Dendritic cell treated with granulocyte-macrophage colony-stimulating factor and Interleukin-4, amounts not matched to agents 40 ng/mL and 50 ng/mL, for 4 days (primary cell): ENCODE measurements at regions of chr20 and their contacts with region 1.

Region 1: DNA sequence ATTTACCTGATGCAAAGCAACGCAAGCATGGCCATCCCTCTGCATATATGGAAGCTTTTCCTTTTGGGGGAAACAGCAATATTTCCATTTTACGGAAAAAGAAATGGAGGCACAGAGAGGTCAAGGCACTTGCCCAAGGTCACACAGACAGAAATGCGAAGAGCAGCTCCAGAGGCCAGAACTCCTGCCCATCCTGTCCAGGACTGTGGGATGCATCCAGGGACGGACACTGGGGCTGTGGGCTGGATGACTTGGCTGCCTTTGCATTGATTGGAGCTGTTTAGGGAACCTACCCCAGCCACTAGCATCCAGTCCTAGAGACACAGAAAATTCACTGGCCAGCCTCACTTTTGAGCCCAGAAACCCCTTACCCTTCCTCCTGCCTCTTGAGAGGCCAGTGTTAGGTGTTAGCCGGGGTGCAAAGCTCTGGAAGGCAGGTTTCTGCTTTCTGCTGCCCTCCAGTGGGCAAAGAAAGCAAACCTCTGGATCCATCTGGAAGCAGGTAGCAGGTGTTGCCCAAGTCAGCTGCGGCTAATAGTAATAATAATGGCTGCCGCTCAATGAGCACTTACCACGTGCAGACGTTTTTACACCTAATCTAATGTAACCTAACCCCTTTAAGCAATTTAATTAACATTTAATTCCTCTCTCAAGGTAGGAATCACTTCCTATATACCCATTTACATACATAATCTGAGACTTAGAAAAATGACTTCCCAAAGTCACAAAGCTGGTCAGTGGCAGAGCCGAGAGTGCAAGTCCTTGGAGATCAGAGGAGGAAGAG is 31.7 kb upstream of the CCN5 start:
- H3K4me3 Mint-ChIP-seq: no peak overlapping the region
- H3K27ac Mint-ChIP-seq: no peak overlapping the region
- H3K4me1 Mint-ChIP-seq: peaks cover 15% of the 10 kb centered on the region
- H3K27me3 Mint-ChIP-seq: no peaks in the 10 kb centered on the region

Region 2: DNA sequence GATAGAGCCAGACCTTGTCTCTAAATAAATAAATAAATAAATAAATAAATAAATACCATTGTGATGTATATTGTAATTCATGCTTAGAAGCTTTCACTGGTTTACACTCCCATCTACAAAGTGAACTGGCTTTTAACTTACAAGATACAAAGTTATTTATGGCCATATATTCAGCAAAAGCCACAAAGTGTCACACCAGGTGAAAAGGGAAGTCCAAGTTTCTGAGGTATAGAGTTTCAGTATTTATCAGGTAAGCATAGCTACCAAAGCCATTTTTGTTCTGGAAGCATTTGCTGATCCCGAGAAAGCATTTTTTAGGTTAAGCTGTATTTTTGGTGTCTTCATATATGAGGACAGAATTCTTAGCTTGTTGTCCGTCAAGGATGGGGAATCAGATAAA is 123.2 kb before region 1 on chr20:
- intact Hi-C with region 1: no loop called
- H3K4me3 Mint-ChIP-seq: no peak overlapping the region
- H3K27ac Mint-ChIP-seq: no peak overlapping the region
- H3K4me1 Mint-ChIP-seq: no peaks in the 10 kb centered on the region
- H3K27me3 Mint-ChIP-seq: no peaks in the 10 kb centered on the region

Region 3: GRCh38 chr20:44651684-44652423 is 31.6 kb before region 1 on chr20 and contains the start of gene ADA:
- intact Hi-C with region 1: no loop called
- H3K4me3 Mint-ChIP-seq: peak within 1 kb of the TSS; percentile 83
- H3K27ac Mint-ChIP-seq: peak within 1 kb of the TSS; percentile 72
- H3K4me1 Mint-ChIP-seq: peaks cover 77% of the 10 kb centered on the region
- H3K27me3 Mint-ChIP-seq: peaks cover 17% of the 10 kb centered on the region

Region 4: GRCh38 chr20:44714696-44715482 is 31.4 kb after region 1 on chr20 and contains the start of gene CCN5:
- intact Hi-C with region 1: loop called (anchors 1 kb)
- H3K4me3 Mint-ChIP-seq: no peak within 1 kb of the TSS
- H3K27ac Mint-ChIP-seq: no peak within 1 kb of the TSS
- H3K4me1 Mint-ChIP-seq: peaks cover 9% of the 10 kb centered on the region
- H3K27me3 Mint-ChIP-seq: peaks cover 8% of the 10 kb centered on the region

Region 5: GRCh38 chr20:44733341-44734069 is 50.0 kb after region 1 on chr20:
- intact Hi-C with region 1: loop called (anchors 1 kb)
- H3K4me3 Mint-ChIP-seq: no peak overlapping the region
- H3K27ac Mint-ChIP-seq: no peak overlapping the region
- H3K4me1 Mint-ChIP-seq: peaks cover 21% of the 10 kb centered on the region
- H3K27me3 Mint-ChIP-seq: peaks cover 3% of the 10 kb centered on the region

Region 6: DNA sequence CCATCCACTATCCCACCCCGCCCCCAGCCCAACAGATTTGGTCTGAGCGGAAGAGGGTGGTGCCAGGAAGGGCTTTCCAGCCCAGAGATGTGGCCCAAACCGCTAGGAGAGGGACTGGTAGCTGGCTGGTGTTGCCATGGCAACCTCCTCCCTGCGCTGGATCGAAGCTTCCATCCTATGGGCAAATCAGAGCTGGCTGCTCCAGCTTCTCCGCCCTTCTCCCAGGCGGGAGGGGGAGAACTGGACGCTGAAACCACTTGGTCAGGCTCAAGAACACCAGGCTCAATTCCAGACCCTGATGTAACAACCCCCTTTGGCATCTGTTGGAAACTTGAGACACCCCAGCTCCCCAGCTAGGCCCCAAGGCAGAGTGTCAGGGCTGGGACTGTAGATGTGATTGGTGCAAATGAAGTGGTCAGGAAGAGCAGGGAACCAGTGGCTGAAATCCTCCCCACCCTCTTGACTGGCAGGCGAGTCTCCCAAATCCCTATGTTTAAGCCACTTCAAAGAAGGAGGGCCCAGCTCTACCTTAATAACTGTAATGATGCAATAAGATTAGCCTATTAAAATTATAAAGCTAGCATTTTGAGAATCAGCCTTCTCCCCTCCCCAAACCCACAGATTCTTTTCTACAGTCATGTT is 122.6 kb after region 1 on chr20:
- intact Hi-C with region 1: no loop called
- H3K4me3 Mint-ChIP-seq: no peak overlapping the region
- H3K27ac Mint-ChIP-seq: no peak overlapping the region
- H3K4me1 Mint-ChIP-seq: peaks cover 10% of the 10 kb centered on the region
- H3K27me3 Mint-ChIP-seq: peaks cover 53% of the 10 kb centered on the region

Region 7: GRCh38 chr20:44866703-44867335 is 183.4 kb after region 1 on chr20:
- intact Hi-C with region 1: loop called (anchors 1 kb)
- H3K4me3 Mint-ChIP-seq: peak overlapping the region; percentile 61
- H3K27ac Mint-ChIP-seq: peak overlapping the region; percentile 26
- H3K4me1 Mint-ChIP-seq: peaks cover 21% of the 10 kb centered on the region
- H3K27me3 Mint-ChIP-seq: peaks cover 10% of the 10 kb centered on the region